H1 (cell line): ENCODE measurements at regions of chr17 and their contacts with region 1.

Region 1: GRCh38 chr17:77088455-77089123 is 52.2 kb upstream of the SEC14L1 start:
- DNase-seq: peak; percentile 93 to 94
- H3K4me3 ChIP-seq: peak overlapping the region; percentile 64 to 95 (median 72)
- H3K27ac ChIP-seq: peak overlapping the region; percentile 79
- H3K4me1 ChIP-seq: peaks cover 0 to 4% (median under 1%) of the 10 kb centered on the region in 4 experiments; a peak in 2 of 7 replicates
- H3K27me3 ChIP-seq: no peaks in the 10 kb centered on the region
- CTCF ChIP-seq: peak; percentile 82 to 94 (median 93)
- EP300 ChIP-seq: peak in 1 of 2 experiments; percentile 62; a peak in 1 of 3 replicates
- POLR2A ChIP-seq: peak; percentile 88 to 92
- RAD21 ChIP-seq: peak; percentile 50 to 59; a peak in 3 of 4 replicates

Region 2: DNA sequence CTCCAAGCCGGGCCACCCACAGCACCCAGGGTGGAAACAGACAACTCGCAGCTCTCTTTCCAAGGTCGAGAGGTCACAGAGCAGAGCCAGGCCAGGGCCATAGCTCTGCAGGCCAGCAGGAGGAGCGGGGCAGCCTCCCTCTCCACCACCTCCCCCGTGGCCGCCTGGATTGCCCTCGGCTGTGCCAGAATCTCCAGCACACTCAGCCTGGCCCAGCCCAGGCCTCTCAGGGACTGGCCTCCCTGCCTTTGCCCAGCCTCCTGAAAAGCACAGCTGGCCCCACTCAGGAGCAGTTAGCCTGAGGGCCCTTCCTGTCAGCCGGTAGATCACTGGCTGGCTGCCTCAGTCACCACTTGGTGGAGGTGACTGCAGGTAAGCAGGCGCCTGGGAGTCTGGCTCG is 33.7 kb before region 1 on chr17:
- CTCF ChIA-PET with region 1: interaction called, 11 read pairs
- POLR2A ChIA-PET with region 1: interaction called, 3 read pairs
- DNase-seq: no peak
- H3K4me3 ChIP-seq: no peak overlapping the region
- H3K27ac ChIP-seq: no peak overlapping the region
- H3K4me1 ChIP-seq: peaks cover 0 to 2% (median 0%) of the 10 kb centered on the region in 4 experiments; a peak in 3 of 7 replicates
- H3K27me3 ChIP-seq: no peaks in the 10 kb centered on the region
- CTCF ChIP-seq: peak in 1 of 3 experiments; percentile 17; a peak in 1 of 4 replicates
- EP300 ChIP-seq: no peak
- POLR2A ChIP-seq: no peak
- RAD21 ChIP-seq: no peak

Region 3: GRCh38 chr17:77076124-77076872 is 12.3 kb before region 1 on chr17:
- CTCF ChIA-PET with region 1: interaction called, 44 read pairs
- POLR2A ChIA-PET with region 1: interaction called, 7 read pairs
- DNase-seq: no peak
- H3K4me3 ChIP-seq: no peak overlapping the region
- H3K27ac ChIP-seq: no peak overlapping the region
- H3K4me1 ChIP-seq: peaks cover 0 to 2% (median 0%) of the 10 kb centered on the region in 4 experiments; a peak in 1 of 7 replicates
- H3K27me3 ChIP-seq: no peaks in the 10 kb centered on the region
- CTCF ChIP-seq: no peak
- EP300 ChIP-seq: no peak
- POLR2A ChIP-seq: no peak
- RAD21 ChIP-seq: no peak

Region 4: GRCh38 chr17:77127735-77128361 is 39.3 kb after region 1 on chr17:
- CTCF ChIA-PET with region 1: interaction called, 10 read pairs
- POLR2A ChIA-PET with region 1: interaction called, 4 read pairs
- DNase-seq: no peak
- H3K4me3 ChIP-seq: no peak overlapping the region
- H3K27ac ChIP-seq: no peak overlapping the region
- H3K4me1 ChIP-seq: no peaks in the 10 kb centered on the region; a peak in 1 of 7 replicates
- H3K27me3 ChIP-seq: no peaks in the 10 kb centered on the region
- CTCF ChIP-seq: no peak
- EP300 ChIP-seq: no peak
- POLR2A ChIP-seq: no peak
- RAD21 ChIP-seq: no peak

Region 5: DNA sequence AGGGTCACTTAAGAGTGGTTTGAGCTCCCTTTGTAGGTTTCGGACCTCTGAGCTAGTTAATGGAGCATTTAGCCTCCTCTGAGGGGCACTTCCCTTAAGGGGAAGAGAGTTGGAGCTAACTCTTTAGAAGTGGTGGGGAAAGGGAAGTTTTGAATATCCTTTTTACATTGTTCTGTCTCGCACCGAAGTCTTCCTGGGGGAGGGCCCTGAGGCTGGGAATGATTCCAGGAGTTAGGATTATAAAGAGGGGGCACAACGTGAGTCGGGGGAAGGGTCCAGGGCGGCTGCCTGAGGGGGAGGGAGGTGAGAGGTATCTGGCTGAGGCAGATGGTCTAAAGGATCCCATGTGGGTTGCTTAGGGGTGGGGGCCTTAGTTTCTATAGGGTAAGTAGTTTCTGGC is 84.5 kb after region 1 on chr17:
- CTCF ChIA-PET with region 1: no interaction called
- POLR2A ChIA-PET with region 1: no interaction called
- DNase-seq: no peak
- H3K4me3 ChIP-seq: 0 out of 8 replicates have a peak overlapping the region, but pooled peaks of 1 of the 4 experiments have one; percentile 2
- H3K27ac ChIP-seq: no peak overlapping the region
- H3K4me1 ChIP-seq: peaks cover 0 to 32% (median 26%) of the 10 kb centered on the region in 4 experiments; a peak in 5 of 7 replicates
- H3K27me3 ChIP-seq: no peaks in the 10 kb centered on the region
- CTCF ChIP-seq: no peak
- EP300 ChIP-seq: no peak
- POLR2A ChIP-seq: no peak
- RAD21 ChIP-seq: no peak

Region 6: GRCh38 chr17:77254951-77255825 is 166.6 kb after region 1 on chr17:
- CTCF ChIA-PET with region 1: interaction called, 20 read pairs
- POLR2A ChIA-PET with region 1: no interaction called
- DNase-seq: no peak
- H3K4me3 ChIP-seq: no peak overlapping the region
- H3K27ac ChIP-seq: no peak overlapping the region
- H3K4me1 ChIP-seq: peaks cover 4 to 10% (median 5%) of the 10 kb centered on the region in 4 experiments; a peak in 6 of 7 replicates
- H3K27me3 ChIP-seq: no peaks in the 10 kb centered on the region
- CTCF ChIP-seq: 0 out of 4 replicates have a peak, but pooled peaks of 1 of the 3 experiments have one; percentile 4
- EP300 ChIP-seq: no peak
- POLR2A ChIP-seq: no peak
- RAD21 ChIP-seq: no peak; a peak in 1 of 4 replicates